GM12878 (cell line): ENCODE measurements at regions of chr21 and their contacts with region 1.

Region 1: GRCh38 chr21:33386222-33386784 is 16.9 kb upstream of the IFNGR2 start:
- DNase-seq: no peak
- ATAC-seq: no peak
- H3K4me3 ChIP-seq: no peak overlapping the region
- H3K27ac ChIP-seq: no peak overlapping the region
- H3K4me1 ChIP-seq: peaks cover 35% of the 10 kb centered on the region
- H3K27me3 ChIP-seq: no peaks in the 10 kb centered on the region
- CTCF ChIP-seq: peak in 1 of 3 experiments; percentile 34; a peak in 1 of 6 replicates
- EP300 ChIP-seq: no peak
- POLR2A ChIP-seq: no peak
- RAD21 ChIP-seq: no peak

Region 2: GRCh38 chr21:33374450-33375096 is 11.7 kb before region 1 on chr21:
- CTCF ChIA-PET with region 1: interaction called, 3 read pairs
- POLR2A ChIA-PET with region 1: no interaction called
- RAD21 ChIA-PET with region 1: no interaction called
- SMC1A ChIA-PET with region 1: interaction called, 10 read pairs
- in situ Hi-C with region 1: no loop called
- intact Hi-C with region 1: no loop called
- DNase-seq: no peak
- ATAC-seq: peak; percentile 87
- H3K4me3 ChIP-seq: no peak overlapping the region
- H3K27ac ChIP-seq: no peak overlapping the region
- H3K4me1 ChIP-seq: peaks cover 17% of the 10 kb centered on the region
- H3K27me3 ChIP-seq: no peaks in the 10 kb centered on the region
- CTCF ChIP-seq: peak; percentile 62 to 74 (median 63)
- EP300 ChIP-seq: peak in 1 of 2 experiments; percentile 27; a peak in 1 of 4 replicates
- POLR2A ChIP-seq: no peak
- RAD21 ChIP-seq: peak; percentile 77

Region 3: DNA sequence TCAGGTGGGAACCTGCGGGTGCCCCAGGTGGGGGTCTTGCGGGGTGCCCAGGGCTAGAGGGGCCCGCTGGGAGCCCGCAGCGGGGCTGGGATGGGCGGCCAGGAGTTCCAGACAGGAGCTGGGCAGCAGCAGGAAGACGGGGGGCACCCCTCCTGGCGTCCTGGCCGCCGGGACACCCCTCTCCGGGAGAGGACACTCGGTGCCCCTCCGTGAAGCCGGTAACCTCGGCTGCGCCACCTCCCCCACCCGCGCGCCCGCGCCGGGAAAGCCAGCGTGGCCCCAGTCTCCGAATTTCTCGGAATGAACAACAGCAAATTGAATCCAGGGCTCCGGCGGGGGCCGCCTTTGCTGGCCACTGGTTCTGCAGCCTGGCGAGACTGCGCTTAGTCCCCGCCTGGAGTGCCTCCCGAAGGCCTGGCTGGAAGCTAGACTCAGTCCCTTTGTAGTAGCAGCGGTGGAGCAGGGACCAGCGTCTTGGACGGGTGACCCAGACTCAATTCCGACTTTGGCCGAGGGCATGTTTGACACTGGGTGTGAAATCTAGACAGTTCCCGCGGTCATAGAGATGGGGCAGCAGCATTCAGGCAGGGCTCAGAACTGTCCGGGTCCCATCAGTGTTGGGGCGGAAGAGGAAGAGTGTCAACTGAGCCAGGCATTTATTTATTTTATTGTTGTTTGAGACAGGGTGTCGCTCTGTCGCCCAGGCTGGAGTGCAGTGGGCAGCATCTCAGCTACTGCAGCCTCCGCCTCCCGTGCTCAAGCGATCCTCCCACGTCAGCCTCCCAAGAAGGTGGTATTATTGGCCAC is 17.7 kb after region 1 on chr21:
- CTCF ChIA-PET with region 1: interaction called, 20 read pairs
- POLR2A ChIA-PET with region 1: interaction called, 48 read pairs
- RAD21 ChIA-PET with region 1: interaction called, 55 read pairs
- SMC1A ChIA-PET with region 1: interaction called, 72 read pairs
- in situ Hi-C with region 1: no loop called
- intact Hi-C with region 1: loop called (anchors 1 kb)
- DNase-seq: no peak
- ATAC-seq: peak; percentile 60
- H3K4me3 ChIP-seq: peak overlapping the region; percentile 84
- H3K27ac ChIP-seq: peak overlapping the region; percentile 97
- H3K4me1 ChIP-seq: peaks cover 15% of the 10 kb centered on the region
- H3K27me3 ChIP-seq: no peaks in the 10 kb centered on the region
- CTCF ChIP-seq: no peak
- EP300 ChIP-seq: no peak
- POLR2A ChIP-seq: peak; percentile 77
- RAD21 ChIP-seq: no peak

Region 4: DNA sequence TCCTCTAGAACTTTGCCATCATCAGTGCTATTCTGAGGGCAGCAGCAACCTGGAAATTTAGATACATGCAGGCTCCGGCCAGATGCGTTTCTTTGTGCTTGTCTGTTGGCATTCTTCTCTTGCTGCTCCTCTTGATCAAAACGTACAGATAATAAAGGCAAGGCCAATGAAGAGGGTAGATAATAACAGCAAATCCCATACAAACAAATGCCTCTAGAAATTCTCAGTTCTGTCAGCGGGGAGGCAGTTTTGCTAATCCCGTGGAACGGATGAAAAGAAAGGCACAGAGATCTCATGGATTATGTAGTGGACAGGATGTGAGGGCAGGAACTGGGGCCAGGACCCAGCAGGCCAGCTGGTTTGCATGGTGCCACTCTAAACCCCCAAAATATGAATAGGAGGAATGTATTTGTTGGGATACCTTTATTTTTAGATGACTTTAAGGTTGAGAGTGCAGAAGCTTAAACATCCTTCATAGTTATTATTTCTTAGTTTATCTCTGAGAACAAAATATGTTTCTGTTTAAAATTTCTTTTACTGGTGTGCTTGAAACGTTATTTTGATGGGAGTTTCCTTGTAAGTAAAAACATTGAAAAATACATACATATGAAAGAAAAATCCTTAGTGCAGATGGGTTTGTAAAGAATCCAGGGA is 257.5 kb after region 1 on chr21:
- CTCF ChIA-PET with region 1: no interaction called
- POLR2A ChIA-PET with region 1: no interaction called
- RAD21 ChIA-PET with region 1: no interaction called
- SMC1A ChIA-PET with region 1: no interaction called
- in situ Hi-C with region 1: no loop called
- intact Hi-C with region 1: no loop called
- DNase-seq: no peak
- ATAC-seq: no peak
- H3K4me3 ChIP-seq: peak overlapping the region; percentile 94
- H3K27ac ChIP-seq: no peak overlapping the region
- H3K4me1 ChIP-seq: no peaks in the 10 kb centered on the region
- H3K27me3 ChIP-seq: peaks cover 0 to 6% of the 10 kb centered on the region in 2 experiments; a peak in 2 of 4 replicates
- CTCF ChIP-seq: no peak
- EP300 ChIP-seq: no peak
- POLR2A ChIP-seq: no peak
- RAD21 ChIP-seq: no peak